WTC11 (cell line): ENCODE measurements at regions of chr12 and their contacts with region 1.

Region 1: DNA sequence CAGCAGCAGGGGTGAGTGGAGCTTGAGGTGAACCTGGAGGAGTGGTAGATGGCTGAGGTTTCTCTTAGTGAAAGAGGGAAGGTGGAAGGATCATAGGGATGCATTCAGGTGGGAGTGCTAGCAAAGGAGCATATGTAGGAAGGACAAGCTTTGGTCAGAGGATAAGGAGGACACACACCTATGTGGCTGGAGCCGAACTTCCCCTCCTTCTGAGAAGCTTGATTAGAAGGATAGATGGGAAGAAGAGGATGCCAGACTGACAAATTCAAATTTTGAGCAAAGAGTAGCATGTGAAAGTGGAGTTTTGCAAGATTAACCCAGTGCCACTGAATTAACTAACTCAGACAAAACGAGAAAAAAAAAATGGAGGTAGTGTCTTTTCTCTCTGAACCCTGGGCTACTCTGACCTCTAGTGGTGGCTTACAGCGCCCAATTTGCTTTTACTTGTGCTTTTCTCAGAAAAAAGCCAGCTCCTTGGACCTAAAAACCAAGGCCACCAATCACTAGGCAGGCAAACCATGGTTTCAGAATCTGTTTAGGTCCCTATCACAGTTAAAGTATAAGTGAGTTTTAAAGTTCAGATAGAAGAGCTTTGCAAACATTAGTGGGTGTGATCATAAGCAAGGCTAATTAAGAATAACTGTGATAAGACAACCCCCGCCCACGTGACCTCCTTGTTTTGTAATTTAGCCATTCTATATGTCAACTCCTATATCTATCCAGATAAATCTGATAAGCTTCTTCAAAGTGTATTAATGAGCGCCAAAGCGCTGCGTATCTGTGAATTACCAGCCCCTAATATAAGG is 15.5 kb downstream of the EMP1 start:
- DNase-seq: peak; percentile 68
- ATAC-seq: peak; percentile 27
- H3K4me3 Mint-ChIP-seq: no peak overlapping the region; the same call in 1 of the 2 replicates
- H3K27ac Mint-ChIP-seq: peak overlapping the region; percentile 82
- H3K4me1 Mint-ChIP-seq: peaks cover 31% of the 10 kb centered on the region
- H3K27me3 Mint-ChIP-seq: no peaks in the 10 kb centered on the region
- CTCF ChIP-seq: peak; percentile 49; the same call in 1 of the 2 replicates

Region 2: DNA sequence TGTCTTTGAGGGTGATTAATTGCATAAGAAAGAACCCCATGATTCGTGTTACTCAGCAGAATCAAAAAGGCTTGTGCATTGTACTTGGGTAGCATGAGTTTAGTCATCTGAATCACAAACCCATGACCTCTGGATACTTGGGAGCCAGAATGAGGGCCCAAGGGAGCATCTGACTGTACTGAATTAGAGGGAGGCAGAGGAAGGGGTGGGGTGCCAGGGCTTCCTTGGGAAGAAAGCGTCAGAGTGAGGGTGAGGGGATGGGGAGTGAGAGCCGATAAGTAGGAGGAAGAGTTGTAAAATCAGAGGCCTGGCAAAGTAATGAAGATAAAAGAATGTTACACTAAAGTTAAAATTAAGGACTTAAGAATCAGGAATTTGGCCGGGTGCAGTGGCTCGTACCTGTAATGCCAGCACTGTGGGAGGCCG is 289.9 kb before region 1 on chr12:
- CTCF ChIA-PET with region 1: interaction called, 43 read pairs
- POLR2A ChIA-PET with region 1: no interaction called
- DNase-seq: no peak
- ATAC-seq: no peak
- H3K4me3 Mint-ChIP-seq: no peak overlapping the region
- H3K27ac Mint-ChIP-seq: no peak overlapping the region
- H3K4me1 Mint-ChIP-seq: peaks cover 12% of the 10 kb centered on the region
- H3K27me3 Mint-ChIP-seq: peaks cover 3% of the 10 kb centered on the region; the same call in 1 of the 2 replicates
- CTCF ChIP-seq: no peak

Region 3: GRCh38 chr12:13023811-13024530 is 188.1 kb before region 1 on chr12:
- CTCF ChIA-PET with region 1: interaction called, 16 read pairs
- POLR2A ChIA-PET with region 1: no interaction called
- DNase-seq: no peak
- ATAC-seq: peak; percentile 76
- H3K4me3 Mint-ChIP-seq: no peak overlapping the region
- H3K27ac Mint-ChIP-seq: no peak overlapping the region
- H3K4me1 Mint-ChIP-seq: peaks cover 8% of the 10 kb centered on the region
- H3K27me3 Mint-ChIP-seq: no peaks in the 10 kb centered on the region
- CTCF ChIP-seq: no peak

Region 4: DNA sequence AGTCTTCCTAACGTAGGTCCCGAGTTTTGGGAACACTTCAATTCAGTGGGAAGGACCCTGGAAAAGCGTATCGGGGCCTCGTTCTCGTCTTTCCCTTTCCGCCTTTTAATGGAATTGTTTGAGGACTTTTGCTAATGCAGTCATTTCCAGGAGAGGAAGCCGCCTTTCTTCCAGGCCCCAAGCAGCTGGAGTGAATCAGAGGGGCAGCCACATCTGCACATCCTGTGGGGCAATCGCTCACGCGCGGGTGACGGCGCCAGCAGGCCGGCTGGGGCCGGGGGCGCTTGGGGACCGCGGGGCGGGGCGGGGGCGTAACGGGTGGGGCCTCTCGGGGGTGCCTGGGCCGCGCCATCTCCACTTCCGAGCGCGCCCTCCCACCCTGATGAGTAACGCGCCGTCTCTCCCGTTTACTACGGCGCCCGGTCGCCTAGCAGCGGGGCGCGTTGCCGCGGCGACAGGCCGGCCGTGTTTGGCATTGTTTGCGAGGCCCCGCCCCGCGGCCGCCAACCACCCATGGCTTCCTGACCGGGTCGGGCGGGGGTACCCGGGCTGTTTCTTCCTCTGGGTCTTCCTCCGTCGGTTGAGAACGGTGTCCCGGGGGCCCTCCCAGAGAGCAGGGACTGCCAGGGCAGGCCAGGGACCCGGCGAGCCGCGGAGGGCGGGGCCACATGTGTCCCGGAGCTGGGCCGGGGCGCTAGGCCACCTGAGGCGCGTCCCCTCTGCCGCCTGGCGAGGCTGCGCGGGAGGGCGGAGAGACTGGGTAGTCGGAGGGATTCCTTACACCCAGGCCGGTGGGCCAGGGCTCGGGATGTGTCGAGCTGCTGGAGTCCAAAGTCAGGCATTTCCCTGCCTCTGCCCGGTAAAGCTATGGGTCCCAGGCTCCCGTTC is 110.9 kb before region 1 on chr12:
- CTCF ChIA-PET with region 1: interaction called, 47 read pairs
- POLR2A ChIA-PET with region 1: no interaction called
- DNase-seq: peak; percentile 87
- ATAC-seq: peak; percentile 83
- H3K4me3 Mint-ChIP-seq: peak overlapping the region; percentile 74
- H3K27ac Mint-ChIP-seq: peak overlapping the region; percentile 36
- H3K4me1 Mint-ChIP-seq: peaks cover 46% of the 10 kb centered on the region
- H3K27me3 Mint-ChIP-seq: peaks cover 3% of the 10 kb centered on the region
- CTCF ChIP-seq: no peak

Region 5: DNA sequence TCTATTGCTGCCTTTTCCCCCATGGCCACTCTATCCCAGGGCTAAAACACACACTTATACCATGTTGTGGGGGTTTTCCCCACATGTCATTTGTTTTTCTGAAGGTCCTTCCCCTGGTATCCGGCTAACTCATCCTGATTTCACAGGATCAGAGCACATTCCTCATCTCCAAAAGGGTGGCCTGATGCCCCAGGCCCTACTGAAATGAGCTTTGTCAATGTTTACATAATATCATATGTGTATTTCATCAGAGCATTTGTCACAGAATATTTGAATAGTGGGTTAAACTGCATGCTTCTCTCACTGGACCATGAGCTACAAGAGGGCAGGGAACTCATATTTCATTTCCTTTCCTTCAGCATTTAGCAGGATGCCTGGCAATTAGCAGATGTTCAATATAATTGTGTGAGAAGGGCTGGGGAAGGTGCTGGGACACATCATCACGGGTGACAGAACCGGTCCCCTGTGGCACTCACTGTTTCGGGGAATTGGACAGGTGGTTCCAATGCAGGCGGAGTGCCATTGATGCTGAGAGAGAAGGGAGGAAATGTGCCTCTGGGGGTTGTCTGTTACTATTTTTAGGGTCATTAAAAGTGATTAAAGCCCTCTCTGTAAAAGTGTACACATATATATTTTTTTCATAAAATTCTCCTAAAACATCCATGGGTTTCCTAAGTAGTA is 11.3 kb after region 1 on chr12:
- CTCF ChIA-PET with region 1: interaction called, 25 read pairs
- POLR2A ChIA-PET with region 1: no interaction called
- DNase-seq: no peak
- ATAC-seq: no peak
- H3K4me3 Mint-ChIP-seq: no peak overlapping the region
- H3K27ac Mint-ChIP-seq: no peak overlapping the region
- H3K4me1 Mint-ChIP-seq: no peaks in the 10 kb centered on the region
- H3K27me3 Mint-ChIP-seq: no peaks in the 10 kb centered on the region; the same call in 1 of the 2 replicates
- CTCF ChIP-seq: no peak

Region 6: GRCh38 chr12:13241833-13242488 is 29.9 kb after region 1 on chr12:
- CTCF ChIA-PET with region 1: no interaction called
- POLR2A ChIA-PET with region 1: no interaction called
- DNase-seq: no peak
- ATAC-seq: no peak
- H3K4me3 Mint-ChIP-seq: no peak overlapping the region
- H3K27ac Mint-ChIP-seq: no peak overlapping the region
- H3K4me1 Mint-ChIP-seq: no peaks in the 10 kb centered on the region
- H3K27me3 Mint-ChIP-seq: no peaks in the 10 kb centered on the region; the same call in 1 of the 2 replicates
- CTCF ChIP-seq: no peak